ENCODE measurements at regions of chr19 and their contacts with region 1.

Region 1: GRCh38 chr19:47682939-47683338 is 30.3 kb upstream of the EHD2 start:
- DNase-seq: no peak
- H3K4me3 ChIP-seq: no peak overlapping the region
- H3K27ac ChIP-seq: no peak overlapping the region
- H3K4me1 ChIP-seq: no peaks in the 10 kb centered on the region
- H3K27me3 ChIP-seq: no peaks in the 10 kb centered on the region
- CTCF ChIP-seq: no peak

Region 2: GRCh38 chr19:47370045-47370611 is 312.8 kb before region 1 on chr19:
- CTCF ChIA-PET with region 1: no interaction called
- dilution Hi-C with region 1: loop called (anchors 10 kb)
- in situ Hi-C with region 1: no loop called
- intact Hi-C with region 1: no loop called
- DNase-seq: no peak
- H3K4me3 ChIP-seq: no peak overlapping the region
- H3K27ac ChIP-seq: no peak overlapping the region
- H3K4me1 ChIP-seq: no peaks in the 10 kb centered on the region
- H3K27me3 ChIP-seq: no peaks in the 10 kb centered on the region
- CTCF ChIP-seq: no peak

Region 3: DNA sequence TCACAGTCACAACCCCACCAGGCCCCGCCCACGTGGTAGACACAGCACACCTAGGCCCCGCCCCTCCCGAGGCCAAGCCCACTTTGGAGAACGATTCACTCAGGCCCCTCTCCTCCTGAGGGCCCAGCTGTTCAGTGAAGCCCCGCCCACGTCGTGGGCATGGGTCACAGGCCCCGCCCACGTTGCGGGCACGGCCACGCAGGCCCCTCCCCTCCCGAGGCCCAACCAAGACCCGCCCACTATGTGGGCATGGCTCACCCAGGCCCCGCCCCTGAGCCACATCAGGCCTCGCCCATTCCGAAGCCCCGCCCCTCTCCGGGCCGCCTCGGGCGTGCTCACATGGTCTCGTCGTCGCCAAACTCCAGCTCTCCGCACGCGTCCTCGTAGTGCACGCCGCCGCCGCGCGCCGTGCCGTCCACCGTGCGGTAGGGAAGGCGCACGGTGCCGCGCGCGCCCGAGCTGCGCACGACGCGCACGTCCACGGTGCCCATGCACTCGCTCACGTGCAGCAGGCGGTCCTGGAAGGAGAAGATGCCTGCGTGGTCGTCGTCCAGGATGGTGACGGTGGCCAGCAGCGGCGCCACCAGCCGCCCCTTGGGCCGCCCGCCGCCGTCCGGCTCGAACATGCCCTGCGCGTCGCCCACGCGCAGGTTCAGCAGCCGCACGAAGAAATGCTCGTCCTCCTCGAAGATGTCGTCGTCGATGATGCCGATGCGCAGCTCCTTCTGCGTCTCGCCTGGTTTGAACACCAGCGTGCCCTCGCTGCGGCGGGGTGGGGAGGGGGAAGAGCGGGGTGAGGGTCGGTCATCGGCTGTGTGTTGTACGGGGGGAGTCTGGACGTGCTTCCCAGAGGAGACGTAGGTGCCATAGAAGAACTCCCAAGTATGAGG is 235.2 kb before region 1 on chr19:
- CTCF ChIA-PET with region 1: no interaction called
- dilution Hi-C with region 1: loop called (anchors 5 kb)
- in situ Hi-C with region 1: no loop called
- intact Hi-C with region 1: no loop called
- DNase-seq: peak; percentile 49
- H3K4me3 ChIP-seq: no peak overlapping the region
- H3K27ac ChIP-seq: no peak overlapping the region
- H3K4me1 ChIP-seq: peaks cover 5% of the 10 kb centered on the region
- H3K27me3 ChIP-seq: peaks cover 27% of the 10 kb centered on the region
- CTCF ChIP-seq: no peak

Region 4: DNA sequence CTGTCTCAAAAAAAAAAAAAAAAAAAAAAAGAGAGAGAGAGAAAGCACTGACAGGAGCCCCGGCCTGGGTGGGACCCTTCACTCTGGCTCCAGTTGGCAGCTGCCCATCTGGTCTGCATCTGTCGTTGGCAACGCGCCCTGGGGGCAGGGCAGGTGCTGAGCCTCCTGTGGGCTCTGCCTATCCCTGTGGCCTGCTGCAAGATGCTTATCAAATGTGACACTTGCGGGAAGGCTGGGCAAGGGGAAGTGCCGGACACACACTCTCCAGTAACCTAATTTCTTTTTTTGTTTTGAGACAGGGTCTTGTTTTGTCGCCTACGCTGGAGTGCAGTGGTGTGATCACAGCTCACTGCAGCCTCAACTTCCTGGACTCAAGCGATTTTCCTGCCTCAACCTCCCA is 188.2 kb before region 1 on chr19:
- CTCF ChIA-PET with region 1: no interaction called
- dilution Hi-C with region 1: loop called (anchors 5 kb)
- in situ Hi-C with region 1: no loop called
- intact Hi-C with region 1: no loop called
- DNase-seq: no peak
- H3K4me3 ChIP-seq: no peak overlapping the region
- H3K27ac ChIP-seq: no peak overlapping the region
- H3K4me1 ChIP-seq: no peaks in the 10 kb centered on the region
- H3K27me3 ChIP-seq: no peaks in the 10 kb centered on the region
- CTCF ChIP-seq: no peak

Region 5: DNA sequence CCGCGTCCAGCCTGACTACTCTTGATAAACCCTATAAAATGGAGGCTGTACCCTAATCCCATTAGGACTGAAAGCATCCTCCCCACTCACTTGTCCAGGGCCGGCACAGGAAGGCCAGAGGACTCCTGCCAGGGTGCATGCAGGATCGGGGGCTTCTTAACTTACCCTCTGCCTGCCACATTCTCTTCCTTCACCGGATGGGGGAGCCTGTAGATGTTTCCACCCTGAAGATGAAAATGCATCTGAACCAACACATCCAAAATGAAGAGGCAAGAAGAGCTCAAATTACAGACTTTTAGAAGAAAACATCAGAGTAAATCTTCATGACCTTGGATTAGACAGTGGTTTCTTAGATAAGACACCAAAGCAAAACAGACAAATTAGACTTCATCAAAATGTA is 142.2 kb before region 1 on chr19:
- CTCF ChIA-PET with region 1: interaction called, 15 read pairs
- dilution Hi-C with region 1: no loop called
- in situ Hi-C with region 1: no loop called
- intact Hi-C with region 1: no loop called
- DNase-seq: no peak
- H3K4me3 ChIP-seq: no peak overlapping the region
- H3K27ac ChIP-seq: no peak overlapping the region
- H3K4me1 ChIP-seq: no peaks in the 10 kb centered on the region
- H3K27me3 ChIP-seq: no peaks in the 10 kb centered on the region
- CTCF ChIP-seq: peak in 1 of 2 donors; percentile 31

Region 6: DNA sequence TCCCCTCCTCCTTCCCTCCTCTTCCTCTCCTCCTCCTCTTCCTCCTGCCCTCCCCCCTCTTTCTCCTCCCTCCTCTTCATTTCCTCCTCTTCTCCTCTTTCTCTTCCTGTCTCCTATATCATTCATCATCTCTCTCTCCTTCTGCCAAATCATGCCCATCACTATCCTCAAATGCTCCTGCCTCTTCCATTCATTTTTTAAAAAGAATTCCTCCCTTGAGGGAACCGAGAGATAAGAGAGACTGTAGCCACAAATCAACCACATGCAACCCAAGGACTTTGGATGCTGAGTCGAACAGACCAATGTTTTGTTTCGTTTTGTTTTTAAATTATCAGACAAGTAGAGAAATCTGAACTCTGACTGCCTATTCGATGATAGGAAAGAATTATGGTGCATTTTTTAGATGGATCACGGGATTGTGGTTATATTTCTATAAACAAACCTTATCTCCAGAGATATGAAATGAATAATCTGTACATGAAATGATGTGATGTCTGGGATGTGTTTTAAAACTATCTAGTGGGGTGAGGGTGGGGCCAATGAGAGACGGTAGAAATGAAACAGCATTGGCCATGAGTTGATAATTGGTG is 100.5 kb before region 1 on chr19:
- CTCF ChIA-PET with region 1: no interaction called
- dilution Hi-C with region 1: loop called (anchors 5 kb)
- in situ Hi-C with region 1: no loop called
- intact Hi-C with region 1: no loop called
- DNase-seq: no peak
- H3K4me3 ChIP-seq: no peak overlapping the region
- H3K27ac ChIP-seq: no peak overlapping the region
- H3K4me1 ChIP-seq: peaks cover 11% of the 10 kb centered on the region
- H3K27me3 ChIP-seq: no peaks in the 10 kb centered on the region
- CTCF ChIP-seq: no peak

Region 7: DNA sequence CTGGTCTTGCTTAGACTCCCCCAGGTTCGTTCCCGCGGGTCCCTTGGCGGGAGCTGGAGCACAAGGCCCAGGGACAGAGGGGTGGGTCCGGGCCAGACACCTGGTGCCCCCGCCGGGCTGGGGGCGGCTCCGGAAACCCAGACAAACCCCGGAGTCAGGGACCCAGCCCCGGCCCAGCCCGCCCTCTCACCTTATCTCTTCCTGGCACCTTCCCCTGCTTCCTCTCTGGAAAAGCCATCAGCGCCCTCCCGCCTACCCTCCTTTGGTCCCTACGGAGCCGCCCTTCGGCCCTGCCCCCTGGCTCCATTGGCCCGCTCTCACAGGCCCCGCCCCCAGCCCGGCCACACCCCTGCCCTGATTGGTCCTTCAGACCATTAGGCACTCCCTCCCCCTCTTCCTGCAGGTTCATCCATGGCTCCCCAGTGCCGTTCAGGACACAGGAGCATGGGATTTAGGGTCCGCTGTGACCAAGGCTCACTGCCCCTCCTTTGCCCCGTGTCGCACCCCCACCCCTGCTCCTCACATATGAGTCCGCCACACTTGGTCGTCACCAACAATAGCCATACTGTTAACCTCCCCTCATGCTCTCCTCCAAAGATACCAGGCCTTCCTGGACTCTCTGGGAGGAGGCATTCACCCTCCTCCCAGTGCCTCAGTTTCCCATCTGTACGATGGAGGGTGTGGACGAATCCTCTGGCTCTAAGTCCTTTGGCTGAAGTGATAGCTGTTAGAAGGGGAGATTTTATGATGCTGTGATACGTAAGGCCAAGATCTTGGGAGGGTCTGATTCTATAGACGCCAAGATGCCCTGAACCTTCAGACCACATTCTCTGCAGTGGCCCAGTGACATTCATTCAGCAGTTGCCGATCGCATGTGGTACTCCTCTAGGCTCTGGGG is 47.3 kb after region 1 on chr19:
- CTCF ChIA-PET with region 1: no interaction called
- dilution Hi-C with region 1: no loop called
- in situ Hi-C with region 1: no loop called
- intact Hi-C with region 1: no loop called
- DNase-seq: peak; percentile 52
- H3K4me3 ChIP-seq: peak overlapping the region; percentile 42 to 49 (median 45)
- H3K27ac ChIP-seq: peak overlapping the region; percentile 77
- H3K4me1 ChIP-seq: peaks cover 42% of the 10 kb centered on the region
- H3K27me3 ChIP-seq: no peaks in the 10 kb centered on the region
- CTCF ChIP-seq: no peak

Region 8: DNA sequence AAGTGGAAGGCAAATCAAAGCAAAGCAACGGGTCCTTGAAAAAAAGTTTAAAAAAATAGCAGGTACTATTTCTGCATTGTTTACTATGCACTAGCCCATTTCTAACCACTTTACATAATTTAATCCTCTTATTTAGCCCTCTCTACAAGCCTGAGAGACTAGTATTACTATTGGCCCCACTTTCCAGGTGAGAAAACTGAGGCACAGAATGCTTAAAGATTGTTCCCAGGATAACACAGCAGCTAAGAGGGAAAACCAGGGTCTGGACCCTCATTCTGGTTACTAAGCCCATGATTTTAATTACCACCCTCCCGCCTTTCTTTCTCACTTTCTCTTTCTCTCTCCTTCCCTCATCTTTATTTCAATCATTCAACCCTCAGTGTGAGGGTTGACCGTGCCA is 493.3 kb after region 1 on chr19:
- CTCF ChIA-PET with region 1: interaction called, 11 read pairs
- dilution Hi-C with region 1: no loop called
- in situ Hi-C with region 1: no loop called
- intact Hi-C with region 1: no loop called
- DNase-seq: no peak
- H3K4me3 ChIP-seq: no peak overlapping the region
- H3K27ac ChIP-seq: no peak overlapping the region
- H3K4me1 ChIP-seq: peaks cover 3% of the 10 kb centered on the region
- H3K27me3 ChIP-seq: no peaks in the 10 kb centered on the region
- CTCF ChIP-seq: no peak

Measured in mammary epithelial cell (primary cell).